Ascending aorta (tissue), 2 donors: ENCODE measurements at regions of chr10 and their contacts with region 1.

Region 1: DNA sequence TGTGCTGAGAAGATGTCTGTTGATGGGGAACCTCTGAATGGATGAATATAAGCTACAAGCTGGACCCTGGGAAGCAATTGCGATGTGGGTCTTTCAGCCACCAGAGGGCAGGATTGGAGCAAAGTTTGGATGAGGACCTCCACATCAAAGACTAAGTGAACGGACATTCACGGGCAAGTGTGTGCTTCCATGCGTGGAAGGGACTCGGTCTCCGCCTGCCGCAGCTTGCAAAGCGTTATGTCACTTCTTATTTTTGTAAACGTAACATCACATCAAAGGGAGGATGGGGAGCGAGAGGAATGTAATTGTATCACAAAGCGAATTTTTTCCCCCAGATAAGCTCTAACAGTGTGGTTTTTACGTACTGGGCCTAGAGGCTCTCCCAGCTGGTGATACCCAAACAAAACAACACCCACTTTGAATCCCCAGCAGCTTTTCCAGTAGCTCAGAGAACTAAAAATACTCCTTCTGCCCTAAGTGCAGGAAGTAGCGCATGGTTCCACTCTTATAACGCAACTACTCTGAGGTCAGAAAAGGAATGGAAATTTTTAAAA is 65.0 kb downstream of the VWA2 start:
- DNase-seq: peak; percentile 36 to 91
- H3K4me3 ChIP-seq: peak overlapping the region; percentile 42 to 52
- H3K27ac ChIP-seq: peak overlapping the region; percentile 47 to 66
- H3K4me1 ChIP-seq: peaks cover 0 to 29% of the 10 kb centered on the region in 2 donors
- H3K27me3 ChIP-seq: no peaks in the 10 kb centered on the region
- CTCF ChIP-seq: peak; percentile 79 to 81 (median 81)

Region 2: DNA sequence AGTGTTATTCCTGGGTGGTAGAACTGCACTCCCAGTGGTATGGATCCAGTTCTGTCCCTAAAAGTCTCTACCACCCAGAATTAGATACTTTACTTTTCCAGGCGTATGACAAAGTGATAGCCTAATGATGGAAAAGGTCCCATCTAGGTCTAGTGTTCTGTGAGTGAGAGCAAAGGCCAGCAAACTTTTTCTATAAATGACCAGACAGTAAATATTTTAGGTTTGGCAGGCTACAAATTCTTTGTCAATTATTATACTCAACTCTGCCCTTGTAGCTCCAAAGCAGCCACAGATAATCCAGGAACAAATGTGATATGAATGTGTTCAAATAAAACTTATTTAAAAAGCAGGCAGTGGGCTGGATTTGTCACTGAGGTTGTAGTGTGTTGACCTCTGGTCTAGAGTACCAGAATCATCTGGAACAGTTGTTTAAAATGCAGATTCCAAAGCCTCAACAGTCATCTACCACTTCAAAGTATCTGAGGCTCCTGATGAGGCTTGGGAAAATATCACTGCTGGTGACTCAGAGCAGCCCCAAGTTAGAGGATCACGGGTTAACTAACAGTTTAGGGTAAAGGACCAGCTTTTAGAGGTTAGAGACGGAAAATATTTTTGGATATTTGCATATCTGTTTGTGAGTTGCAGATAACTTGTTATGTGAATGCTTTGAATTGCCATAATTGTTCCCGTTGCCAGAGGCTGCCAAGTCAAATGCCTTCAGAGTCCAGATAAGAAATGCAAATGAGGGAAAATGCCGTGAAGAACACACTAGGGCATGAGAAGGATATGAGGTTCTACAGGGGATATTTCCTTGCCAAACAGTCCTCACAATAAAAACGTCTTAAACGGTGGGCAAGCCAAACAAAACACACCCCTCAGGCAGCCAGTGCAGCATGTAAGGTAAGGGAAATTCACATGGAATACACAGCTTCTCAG is 659.6 kb before region 1 on chr10:
- intact Hi-C with region 1: no loop called
- DNase-seq: no peak
- H3K4me3 ChIP-seq: no peak overlapping the region
- H3K27ac ChIP-seq: no peak overlapping the region
- H3K4me1 ChIP-seq: peaks cover 0 to 8% of the 10 kb centered on the region in 2 donors
- H3K27me3 ChIP-seq: no peaks in the 10 kb centered on the region
- CTCF ChIP-seq: no peak

Region 3: DNA sequence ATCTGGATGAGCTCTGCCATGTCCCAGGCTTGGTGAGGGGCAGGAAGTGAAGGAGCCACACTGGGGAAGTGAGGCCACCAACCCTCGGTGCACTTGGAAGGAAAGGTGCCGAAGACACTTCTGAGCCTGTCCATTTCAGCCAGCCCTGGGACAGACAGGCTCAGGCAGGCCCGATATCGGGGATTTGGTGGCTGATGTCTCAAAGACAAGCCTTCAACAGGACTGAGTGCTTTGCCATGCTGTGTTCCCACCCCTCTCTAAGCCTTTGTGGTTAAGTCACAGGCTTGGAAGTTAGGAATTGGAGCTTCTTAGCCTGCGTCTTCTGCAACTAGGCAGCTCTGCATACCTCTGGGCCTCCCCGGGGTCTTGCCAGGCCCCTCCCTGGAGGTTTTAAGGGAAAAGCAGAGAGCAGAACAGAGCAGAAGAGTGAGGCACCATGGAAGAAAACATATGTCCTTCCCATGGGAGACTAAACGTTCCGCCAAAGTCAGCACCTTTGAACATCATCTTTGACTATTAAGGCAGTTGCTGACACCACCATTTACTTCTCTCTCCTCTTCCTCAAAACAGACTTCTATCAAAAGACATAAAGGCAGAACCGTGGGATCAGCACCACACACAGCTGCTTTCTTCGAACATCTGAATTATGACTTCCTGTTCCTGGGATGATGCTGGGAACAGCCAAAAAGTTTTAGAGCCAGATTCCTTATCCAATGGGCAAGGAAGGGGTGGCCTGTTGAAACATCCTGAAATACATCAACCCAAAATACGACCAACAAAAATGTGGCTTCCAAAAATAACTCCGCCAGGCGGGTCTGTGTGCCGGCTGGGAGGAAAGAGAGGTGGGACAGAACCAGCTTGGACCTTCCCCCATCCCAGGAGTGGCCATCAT is 28.5 kb after region 1 on chr10:
- intact Hi-C with region 1: loop called (anchors 2 kb)
- DNase-seq: peak in 1 of 2 donors; percentile 78
- H3K4me3 ChIP-seq: peak overlapping the region in 1 of 2 donors; percentile 4
- H3K27ac ChIP-seq: peak overlapping the region; percentile 73 to 86
- H3K4me1 ChIP-seq: peaks cover 8 to 33% of the 10 kb centered on the region in 2 donors
- H3K27me3 ChIP-seq: no peaks in the 10 kb centered on the region
- CTCF ChIP-seq: no peak

Region 4: DNA sequence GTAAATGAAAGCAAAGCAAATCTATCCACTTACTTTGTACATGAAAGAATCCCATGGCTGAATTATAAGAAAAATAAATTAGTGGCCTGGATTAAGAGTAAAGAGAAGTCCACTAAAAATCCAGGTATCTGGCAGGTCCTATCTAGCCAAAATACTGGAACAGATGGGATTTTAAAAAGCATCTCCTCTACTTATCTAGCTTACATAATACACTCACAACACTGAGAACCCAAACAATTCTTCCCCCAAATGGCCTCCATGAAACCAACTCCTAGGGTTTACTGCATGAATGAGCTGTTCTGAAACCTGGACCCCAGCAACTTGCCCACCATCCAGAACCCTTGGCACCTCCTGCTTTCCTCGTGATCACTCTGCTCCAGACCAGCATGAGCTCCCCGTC is 38.9 kb after region 1 on chr10:
- intact Hi-C with region 1: no loop called
- DNase-seq: no peak
- H3K4me3 ChIP-seq: no peak overlapping the region
- H3K27ac ChIP-seq: peak overlapping the region in 1 of 2 donors; percentile 73
- H3K4me1 ChIP-seq: peaks cover 0 to 9% of the 10 kb centered on the region in 2 donors
- H3K27me3 ChIP-seq: no peaks in the 10 kb centered on the region
- CTCF ChIP-seq: no peak

Region 5: DNA sequence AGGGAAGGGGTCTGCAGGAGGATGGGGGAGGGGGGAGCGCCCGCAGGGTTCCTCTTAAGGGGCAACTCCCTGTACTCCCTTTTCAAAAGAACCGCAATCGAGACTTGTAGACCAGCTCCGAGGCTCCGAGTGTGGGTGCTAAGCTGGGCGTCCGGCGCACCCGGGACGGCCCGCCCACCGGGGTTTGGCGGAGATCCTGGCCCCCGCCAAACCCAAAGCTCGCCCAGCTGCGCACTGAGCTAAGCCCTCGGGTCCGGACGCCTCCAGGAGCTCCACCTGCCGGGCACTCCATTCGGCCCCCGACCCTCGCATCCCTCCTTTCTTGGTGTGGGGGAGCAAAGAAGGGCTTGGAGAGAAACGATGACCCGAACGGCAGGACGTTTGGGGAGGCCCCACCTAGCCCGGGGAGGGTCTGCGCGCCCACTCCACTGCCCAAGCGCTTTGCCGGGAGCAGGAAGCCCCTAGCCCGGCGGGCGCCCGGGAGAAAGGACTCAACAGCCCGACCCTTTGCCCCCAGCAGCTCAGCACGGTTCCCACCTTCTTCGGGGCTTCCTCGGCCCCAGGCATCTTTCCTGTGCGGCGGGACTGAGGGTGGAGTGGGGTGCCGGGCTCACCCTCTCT is 99.6 kb after region 1 on chr10:
- intact Hi-C with region 1: loop called (anchors 2 kb)
- DNase-seq: peak in 1 of 2 donors; percentile 66
- H3K4me3 ChIP-seq: peak overlapping the region; percentile 66 to 72
- H3K27ac ChIP-seq: peak overlapping the region; percentile 24 to 55
- H3K4me1 ChIP-seq: peaks cover 0 to 10% of the 10 kb centered on the region in 2 donors
- H3K27me3 ChIP-seq: no peaks in the 10 kb centered on the region
- CTCF ChIP-seq: peak in 2 of 3 experiments; percentile 12 to 47

Region 6: GRCh38 chr10:114437456-114438292 is 133.6 kb after region 1 on chr10:
- intact Hi-C with region 1: loop called (anchors 1 kb)
- DNase-seq: no peak
- H3K4me3 ChIP-seq: no peak overlapping the region
- H3K27ac ChIP-seq: no peak overlapping the region
- H3K4me1 ChIP-seq: no peaks in the 10 kb centered on the region
- H3K27me3 ChIP-seq: no peaks in the 10 kb centered on the region
- CTCF ChIP-seq: peak; percentile 35 to 50 (median 37)

Region 7: GRCh38 chr10:114458955-114459354 is 154.9 kb after region 1 on chr10:
- intact Hi-C with region 1: loop called (anchors 5 kb)
- DNase-seq: no peak
- H3K4me3 ChIP-seq: no peak overlapping the region
- H3K27ac ChIP-seq: no peak overlapping the region
- H3K4me1 ChIP-seq: no peaks in the 10 kb centered on the region
- H3K27me3 ChIP-seq: no peaks in the 10 kb centered on the region
- CTCF ChIP-seq: peak in 2 of 3 experiments; percentile 22 to 30

Region 8: DNA sequence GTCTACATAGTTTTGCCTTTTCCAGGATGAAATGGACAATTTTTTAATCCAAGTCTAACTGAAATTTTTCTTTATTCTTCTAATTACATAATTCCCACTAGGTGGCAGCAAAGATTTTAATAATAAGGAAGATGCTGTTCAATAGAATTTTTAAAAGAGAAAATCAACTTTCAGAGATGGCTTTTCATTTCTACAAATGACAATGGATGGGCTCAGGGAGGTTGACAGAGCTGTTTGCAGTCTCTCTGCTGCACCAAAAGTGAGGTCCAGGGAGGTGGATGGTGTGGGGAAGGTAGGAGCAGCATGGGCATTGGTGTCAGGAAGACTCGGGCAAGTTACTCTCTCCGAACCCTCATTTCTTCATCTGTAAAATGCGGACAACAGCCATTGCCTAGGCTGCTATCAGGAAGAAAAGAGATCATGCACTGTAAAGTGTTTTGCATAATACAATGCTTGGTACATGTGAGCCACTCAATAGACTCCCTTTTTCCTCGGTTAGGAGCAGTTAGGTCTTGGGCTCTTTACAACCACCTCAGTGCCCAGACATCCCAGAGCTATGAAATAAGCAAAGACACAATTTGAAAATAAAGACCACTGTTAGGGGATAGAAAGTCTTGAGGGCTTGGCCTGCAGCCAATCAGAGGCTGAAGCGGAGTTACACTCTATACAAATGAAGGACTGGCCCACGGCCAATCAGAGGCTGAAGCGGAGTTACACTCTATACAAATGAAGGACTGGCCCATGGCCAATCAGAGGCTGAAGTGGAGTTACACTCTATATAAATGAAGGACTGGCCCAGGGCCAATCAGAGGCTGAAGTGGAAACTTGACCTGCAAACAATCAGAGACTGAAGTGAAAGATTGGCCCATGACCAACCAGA is 246.9 kb after region 1 on chr10:
- intact Hi-C with region 1: loop called (anchors 5 kb)
- DNase-seq: no peak
- H3K4me3 ChIP-seq: peak overlapping the region; percentile 13 to 46
- H3K27ac ChIP-seq: no peak overlapping the region
- H3K4me1 ChIP-seq: peaks cover 0 to 2% of the 10 kb centered on the region in 2 donors
- H3K27me3 ChIP-seq: no peaks in the 10 kb centered on the region
- CTCF ChIP-seq: peak; percentile 36 to 68 (median 45)